ENCODE measurements at regions of chr13 and their contacts with region 1.

Region 1: GRCh38 chr13:22357132-22357531 is 686.3 kb downstream of the FGF9 start:
- DNase-seq: peak in 3 of 5 donors; percentile 18 to 26 (median 19)
- ATAC-seq: peak; percentile 88 to 97 (median 95)
- H3K4me3 ChIP-seq: no peak overlapping the region
- H3K27ac ChIP-seq: peak overlapping the region in 11 of 12 donors; percentile 10 to 81 (median 51)
- H3K4me1 ChIP-seq: peaks cover 0 to 6% (median 0%) of the 10 kb centered on the region in 12 donors
- H3K27me3 ChIP-seq: no peaks in the 10 kb centered on the region
- CTCF ChIP-seq: no peak
- POLR2A ChIP-seq: no peak

Region 2: DNA sequence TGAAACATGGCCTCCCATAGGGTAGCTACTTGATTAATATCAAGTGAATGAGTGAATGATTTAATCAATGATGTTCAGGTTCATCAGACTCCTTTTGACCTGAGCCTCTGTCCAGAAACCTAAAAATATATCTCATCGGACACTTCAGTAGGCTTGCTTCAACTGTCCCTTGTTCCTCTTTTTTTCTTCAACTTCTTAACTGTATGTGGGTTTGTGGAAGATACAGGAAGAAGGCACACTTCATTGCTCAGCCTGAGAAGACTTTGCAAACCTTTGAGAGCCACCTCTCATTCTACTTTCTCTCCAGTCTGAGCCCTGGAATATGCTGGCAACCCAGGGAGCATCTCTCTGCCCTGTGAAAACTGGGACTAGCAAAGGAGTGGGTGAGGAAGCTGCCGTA is 129.2 kb before region 1 on chr13:
- intact Hi-C with region 1: no loop called
- DNase-seq: no peak
- ATAC-seq: no peak
- H3K4me3 ChIP-seq: no peak overlapping the region
- H3K27ac ChIP-seq: no peak overlapping the region
- H3K4me1 ChIP-seq: no peaks in the 10 kb centered on the region
- H3K27me3 ChIP-seq: no peaks in the 10 kb centered on the region
- CTCF ChIP-seq: no peak
- POLR2A ChIP-seq: no peak

Region 3: GRCh38 chr13:22428188-22428828 is 71.2 kb after region 1 on chr13:
- intact Hi-C with region 1: loop called in 1 of 10 experiments (anchors 1 kb)
- DNase-seq: peak in 4 of 5 donors; percentile 40 to 48 (median 46)
- ATAC-seq: peak; percentile 95 to 97 (median 96)
- H3K4me3 ChIP-seq: peak overlapping the region in 5 of 12 donors; percentile 2 to 24 (median 12)
- H3K27ac ChIP-seq: peak overlapping the region; percentile 39 to 87 (median 76)
- H3K4me1 ChIP-seq: peaks cover 0 to 34% (median 7%) of the 10 kb centered on the region in 12 donors
- H3K27me3 ChIP-seq: no peaks in the 10 kb centered on the region
- CTCF ChIP-seq: no peak
- POLR2A ChIP-seq: no peak

Measured in heart left ventricle (tissue), 16 donors.